HepG2 (cell line): ENCODE measurements at regions of chr5 and their contacts with region 1.

Region 1: DNA sequence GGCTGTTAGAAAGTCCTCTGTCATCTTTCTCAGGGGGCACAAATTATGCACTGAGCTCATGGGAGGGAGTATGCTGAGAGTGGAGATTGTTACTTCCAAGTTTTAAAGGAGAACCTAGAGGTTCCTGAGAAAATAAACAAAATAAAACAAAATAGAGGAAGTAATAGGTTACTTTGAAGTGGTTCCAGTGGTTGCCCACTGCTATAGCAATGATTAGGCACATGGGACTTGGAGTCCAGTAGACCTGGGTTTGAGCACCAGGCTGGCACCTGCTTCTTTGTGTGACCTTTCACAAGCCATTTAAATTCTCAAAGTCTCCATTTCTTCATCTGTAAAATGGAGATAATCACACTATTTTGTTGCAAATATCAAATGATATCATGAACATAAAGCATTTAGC is 13.8 kb upstream of the CDC23 start:
- DNase-seq: no peak
- ATAC-seq: no peak
- H3K4me3 ChIP-seq: no peak overlapping the region
- H3K27ac ChIP-seq: no peak overlapping the region
- H3K4me1 ChIP-seq: peaks cover 36% of the 10 kb centered on the region
- H3K27me3 ChIP-seq: no peaks in the 10 kb centered on the region
- CTCF ChIP-seq: no peak
- EP300 ChIP-seq: no peak
- POLR2A ChIP-seq: no peak
- RAD21 ChIP-seq: no peak

Region 2: DNA sequence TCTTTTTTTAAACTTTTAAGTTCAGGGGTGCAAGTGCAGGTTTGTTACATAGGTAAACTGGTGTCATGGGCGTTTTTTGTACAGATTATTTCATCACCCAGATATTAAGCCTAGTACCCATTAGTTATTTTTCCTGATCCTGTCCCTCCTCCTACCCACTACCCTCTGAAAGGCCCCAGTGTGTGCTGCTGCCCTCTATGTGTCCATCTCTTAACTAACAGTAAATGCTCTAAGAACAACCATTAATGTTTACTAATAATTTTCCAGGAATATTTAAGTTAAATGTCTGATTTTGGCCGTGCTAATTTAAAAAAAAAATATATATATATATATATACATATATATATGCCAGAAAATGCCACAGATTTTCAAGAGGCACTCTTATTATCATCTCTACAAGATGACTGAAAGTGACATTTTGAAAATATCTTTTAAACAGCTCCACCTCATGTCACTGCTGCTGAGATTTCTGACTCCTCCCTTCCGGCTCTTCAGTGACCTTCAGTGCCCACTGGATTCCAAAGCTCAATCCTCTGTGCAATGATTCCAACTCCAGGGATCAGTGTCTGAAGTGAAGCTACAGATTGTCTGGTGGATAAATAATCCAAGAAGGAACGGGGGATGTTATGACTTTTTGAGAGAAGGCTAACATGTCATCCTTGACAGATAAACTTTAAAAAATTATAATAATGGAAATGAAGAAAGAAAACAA is 426.1 kb before region 1 on chr5:
- CTCF ChIA-PET with region 1: no interaction called
- POLR2A ChIA-PET with region 1: no interaction called
- in situ Hi-C with region 1: no loop called
- intact Hi-C with region 1: no loop called
- DNase-seq: peak; percentile 8
- ATAC-seq: peak; percentile 49; the same call in 2 of the 3 replicates
- H3K4me3 ChIP-seq: no peak overlapping the region
- H3K27ac ChIP-seq: no peak overlapping the region
- H3K4me1 ChIP-seq: no peaks in the 10 kb centered on the region
- H3K27me3 ChIP-seq: 0 out of 5 replicates have a peak, but pooled peaks cover 0 to 2% of the 10 kb centered on the region in 2 experiments
- CTCF ChIP-seq: no peak
- EP300 ChIP-seq: no peak
- POLR2A ChIP-seq: no peak
- RAD21 ChIP-seq: no peak

Region 3: DNA sequence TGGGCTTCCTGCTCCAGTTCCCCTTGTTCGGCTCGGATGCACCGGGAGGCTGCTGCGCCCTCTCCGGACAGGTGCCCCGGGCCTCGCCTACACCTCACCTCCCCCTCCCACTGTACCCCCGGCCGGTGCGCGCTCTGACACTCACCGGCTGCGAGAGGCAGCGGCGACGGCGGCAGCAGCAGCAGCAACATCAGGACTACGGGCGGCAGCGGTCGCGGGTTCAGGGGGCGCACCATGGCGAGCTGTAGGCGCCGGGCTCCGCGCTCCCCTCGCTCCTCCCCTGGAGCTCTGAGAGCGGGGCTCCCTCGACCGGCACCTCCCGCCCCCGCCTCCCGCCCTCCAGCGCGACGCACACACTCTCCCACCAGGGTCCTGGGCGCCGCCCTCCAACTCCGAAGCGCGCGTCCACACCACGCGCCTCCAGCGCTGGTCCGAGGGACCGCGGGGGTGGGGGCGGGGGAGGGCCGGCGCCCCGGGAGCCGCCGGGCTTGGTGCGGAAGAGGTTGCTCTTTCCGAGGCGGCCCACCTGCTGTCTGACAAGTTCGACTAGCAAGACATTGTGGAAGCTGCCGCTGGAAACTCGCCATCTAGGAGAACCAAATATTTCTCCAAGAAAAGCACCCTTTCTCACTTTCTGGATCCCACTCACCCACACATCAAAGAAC is 47.4 kb after region 1 on chr5 and contains the start of gene GFRA3:
- CTCF ChIA-PET with region 1: interaction called, 6 read pairs
- POLR2A ChIA-PET with region 1: no interaction called
- in situ Hi-C with region 1: loop called (anchors 5 kb)
- intact Hi-C with region 1: no loop called
- DNase-seq: no peak
- ATAC-seq: peak; percentile 38
- H3K4me3 ChIP-seq: peak within 1 kb of the TSS; percentile 40 to 66 (median 50); a peak in 5 of 6 replicates
- H3K27ac ChIP-seq: no peak within 1 kb of the TSS
- H3K4me1 ChIP-seq: peaks cover 33% of the 10 kb centered on the region
- H3K27me3 ChIP-seq: peaks cover 0 to 16% of the 10 kb centered on the region in 2 experiments; a peak in 3 of 5 replicates
- CTCF ChIP-seq: peak; percentile 20; the same call in 1 of the 2 replicates
- EP300 ChIP-seq: no peak
- POLR2A ChIP-seq: no peak
- RAD21 ChIP-seq: no peak
- total RNA-seq, gene GFRA3: 0.10 and 0.27 TPM in 2 replicates

Region 4: GRCh38 chr5:138282920-138283742 is 56.2 kb after region 1 on chr5:
- CTCF ChIA-PET with region 1: interaction called, 33 read pairs
- POLR2A ChIA-PET with region 1: no interaction called
- in situ Hi-C with region 1: no loop called
- intact Hi-C with region 1: loop called (anchors 1 kb)
- DNase-seq: peak; percentile 68
- ATAC-seq: peak; percentile 96
- H3K4me3 ChIP-seq: no peak overlapping the region
- H3K27ac ChIP-seq: no peak overlapping the region
- H3K4me1 ChIP-seq: no peaks in the 10 kb centered on the region
- H3K27me3 ChIP-seq: no peaks in the 10 kb centered on the region
- CTCF ChIP-seq: peak; percentile 86
- EP300 ChIP-seq: no peak
- POLR2A ChIP-seq: no peak
- RAD21 ChIP-seq: peak; percentile 88